ENCODE measurements at regions of chr9 and their contacts with region 1.

Region 1: GRCh38 chr9:101437806-101438232 is 2.2 kb upstream of the ALDOB start:
- DNase-seq: peak; percentile 68
- ATAC-seq: peak; percentile 92

Region 2: GRCh38 chr9:101398068-101398929 is 39.5 kb before region 1 on chr9 and contains the starts of genes MRPL50 and ZNF189:
- intact Hi-C with region 1: loop called (anchors 5 kb)
- DNase-seq: peak; percentile 98
- ATAC-seq: peak; percentile 98
- total RNA-seq, gene MRPL50: 16.5 TPM
- total RNA-seq, gene ZNF189: 14.6 TPM